Aorta (tissue), 5 donors: ENCODE measurements at regions of chr12 and their contacts with region 1.

Region 1: GRCh38 chr12:990661-991349 is at the start of gene ERC1:
- DNase-seq: peak; percentile 93 to 96
- ATAC-seq: peak; percentile 96
- H3K4me3 ChIP-seq: peak within 1 kb of the TSS; percentile 75 to 85
- H3K27ac ChIP-seq: peak within 1 kb of the TSS; percentile 20 to 93
- H3K4me1 ChIP-seq: no peaks in the 10 kb centered on the region
- H3K27me3 ChIP-seq: no peaks in the 10 kb centered on the region
- total RNA-seq, gene ERC1: 81.1 to 99.8 TPM

Region 2: DNA sequence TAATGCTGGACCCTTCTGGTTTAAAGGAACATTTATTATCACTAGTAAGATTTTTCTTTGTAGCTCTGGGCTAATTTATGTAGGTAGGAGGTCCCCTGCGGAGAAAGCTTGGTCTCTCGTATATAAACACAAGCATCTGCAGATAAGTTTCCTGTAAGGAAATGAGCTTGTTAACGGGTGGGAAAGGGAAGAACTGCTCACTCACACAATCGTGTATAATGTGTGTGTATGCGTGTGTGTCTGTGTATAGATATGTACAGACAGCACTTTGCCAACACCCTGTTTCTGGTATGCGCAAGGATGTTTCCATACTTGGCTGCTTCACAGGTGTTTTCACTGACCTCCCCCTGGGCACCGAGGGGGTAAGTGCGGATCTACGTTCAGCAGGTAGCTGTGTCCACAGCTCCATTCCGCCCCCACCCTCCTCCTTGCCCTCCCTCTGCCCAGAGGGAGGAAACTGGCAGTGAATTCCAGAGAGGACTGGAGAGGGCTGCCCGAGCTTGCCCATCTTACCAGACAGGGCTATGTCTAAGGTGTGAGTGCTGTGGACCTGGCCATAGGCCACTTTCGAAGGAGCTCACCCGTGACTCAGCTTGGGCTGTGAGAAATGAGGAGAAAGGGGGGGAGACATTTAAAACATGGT is 392.8 kb before region 1 on chr12:
- intact Hi-C with region 1: no loop called
- DNase-seq: no peak
- ATAC-seq: no peak
- H3K4me3 ChIP-seq: no peak overlapping the region
- H3K27ac ChIP-seq: no peak overlapping the region
- H3K4me1 ChIP-seq: no peaks in the 10 kb centered on the region
- H3K27me3 ChIP-seq: no peaks in the 10 kb centered on the region

Region 3: DNA sequence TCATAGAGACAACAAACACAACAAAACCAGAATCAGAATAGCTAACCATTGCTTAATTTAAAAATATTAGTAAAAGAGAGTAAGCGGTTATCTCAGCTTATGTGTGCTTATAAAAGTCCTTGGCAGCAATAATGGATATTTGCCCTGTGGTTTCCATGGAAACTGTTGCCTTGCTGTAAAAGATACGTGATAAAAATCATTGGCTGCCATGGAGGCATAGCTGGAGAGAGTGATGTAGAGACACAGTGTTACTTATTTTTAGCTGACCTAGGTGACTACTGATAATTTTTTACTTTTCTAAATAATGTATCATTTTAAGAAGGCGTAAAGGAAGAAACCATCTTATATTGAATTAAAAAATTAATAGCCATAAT is 93.1 kb after region 1 on chr12:
- intact Hi-C with region 1: loop called (anchors 5 kb)
- DNase-seq: no peak
- ATAC-seq: peak; percentile 83
- H3K4me3 ChIP-seq: peak overlapping the region in 1 of 2 donors; percentile 41
- H3K27ac ChIP-seq: peak overlapping the region in 1 of 2 donors; percentile 23
- H3K4me1 ChIP-seq: no peaks in the 10 kb centered on the region
- H3K27me3 ChIP-seq: no peaks in the 10 kb centered on the region